ENCODE measurements at regions of chr22 and their contacts with region 1.

Region 1: GRCh38 chr22:24707470-24707801 is 67.1 kb downstream of the PIWIL3 start:
- DNase-seq: peak; percentile 27 to 38
- H3K4me3 ChIP-seq: no peak overlapping the region
- H3K27ac ChIP-seq: no peak overlapping the region
- H3K4me1 ChIP-seq: peaks cover 0 to 5% of the 10 kb centered on the region in 2 donors
- H3K27me3 ChIP-seq: no peaks in the 10 kb centered on the region
- CTCF ChIP-seq: peak in 2 of 6 experiments; percentile 19 to 33
- POLR2A ChIP-seq: no peak

Region 2: GRCh38 chr22:24758164-24758799 is 50.8 kb after region 1 on chr22:
- intact Hi-C with region 1: loop called (anchors 10 kb)
- DNase-seq: peak; percentile 54 to 72
- H3K4me3 ChIP-seq: no peak overlapping the region
- H3K27ac ChIP-seq: no peak overlapping the region
- H3K4me1 ChIP-seq: no peaks in the 10 kb centered on the region
- H3K27me3 ChIP-seq: no peaks in the 10 kb centered on the region
- CTCF ChIP-seq: peak; percentile 71 to 84 (median 79)
- POLR2A ChIP-seq: no peak

Measured in thyroid gland (tissue), 4 donors.